ENCODE measurements at regions of chr10 and their contacts with region 1.

Region 1: DNA sequence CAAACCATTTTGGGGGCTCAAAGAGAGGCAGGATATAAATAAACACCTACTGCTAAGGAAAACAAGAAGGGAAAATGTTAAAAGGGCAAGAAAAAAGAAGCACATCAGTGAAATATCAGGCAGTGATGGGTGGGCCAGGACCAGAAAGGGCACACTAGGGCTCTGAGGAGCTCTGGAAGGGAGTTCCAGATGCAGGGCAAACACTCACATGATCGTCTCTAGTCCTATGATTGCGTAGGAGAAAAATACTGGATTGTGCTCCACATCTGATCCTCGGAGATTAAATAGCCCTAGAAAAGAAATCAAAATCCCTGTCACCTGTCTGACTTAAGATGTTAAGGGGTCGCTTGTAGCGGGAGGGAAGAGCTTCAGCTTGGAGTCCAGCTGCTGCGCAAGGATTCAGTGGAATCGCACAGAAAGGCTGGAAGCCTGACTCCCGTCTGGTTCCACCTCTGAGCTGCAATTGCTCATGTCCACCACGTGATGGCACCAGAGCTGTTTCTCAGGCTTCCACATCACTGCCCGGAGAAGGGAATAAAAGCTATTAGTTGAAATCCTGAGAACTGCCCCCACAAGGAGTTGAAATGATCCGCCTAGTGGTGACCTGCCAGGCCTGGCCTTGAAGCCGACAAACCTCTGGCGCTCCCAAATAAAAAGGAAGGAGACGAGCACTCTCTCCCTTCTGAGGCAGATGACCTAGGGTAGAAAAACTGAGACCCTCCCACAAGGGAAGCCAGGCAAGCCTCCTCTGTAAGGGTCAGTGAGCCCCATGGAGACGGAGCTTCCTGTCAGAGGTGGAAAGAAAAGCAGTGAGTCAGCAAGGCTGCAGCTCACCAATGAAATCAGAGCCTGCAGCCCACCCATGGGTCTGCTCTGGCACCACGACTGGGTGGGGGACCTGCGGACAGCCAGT is 39.2 kb downstream of the XPNPEP1 start:
- DNase-seq: peak; percentile 90
- H3K4me3 Mint-ChIP-seq: no peak overlapping the region
- H3K27ac Mint-ChIP-seq: no peak overlapping the region
- H3K4me1 Mint-ChIP-seq: no peaks in the 10 kb centered on the region
- H3K27me3 Mint-ChIP-seq: no peaks in the 10 kb centered on the region
- CTCF ChIP-seq: peak; percentile 92

Region 2: GRCh38 chr10:109166935-109167334 is 717.2 kb before region 1 on chr10:
- CTCF ChIA-PET with region 1: no interaction called
- POLR2A ChIA-PET with region 1: no interaction called
- intact Hi-C with region 1: no loop called
- DNase-seq: no peak
- H3K4me3 Mint-ChIP-seq: no peak overlapping the region
- H3K27ac Mint-ChIP-seq: no peak overlapping the region
- H3K4me1 Mint-ChIP-seq: peaks cover 13% of the 10 kb centered on the region
- H3K27me3 Mint-ChIP-seq: no peaks in the 10 kb centered on the region
- CTCF ChIP-seq: no peak

Region 3: DNA sequence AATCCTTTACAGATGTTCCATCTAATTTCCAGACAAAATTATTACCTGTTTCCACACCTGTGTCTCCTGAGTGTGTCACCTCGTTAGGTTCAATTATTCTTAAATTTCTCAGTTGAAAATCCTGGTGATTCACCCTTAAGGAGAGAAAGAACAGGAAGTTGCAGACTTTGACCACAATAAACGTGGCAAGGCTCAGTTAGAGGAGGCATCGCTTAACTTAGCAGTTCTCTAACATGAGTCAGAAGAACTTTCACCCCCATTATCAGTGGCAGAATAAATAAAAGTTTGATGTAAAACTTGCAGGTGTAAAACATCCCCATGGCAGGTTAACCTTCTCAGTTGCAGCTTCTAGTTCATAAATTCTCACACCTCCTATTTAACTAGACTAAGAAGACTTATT is 30.9 kb after region 1 on chr10:
- CTCF ChIA-PET with region 1: interaction called, 12 read pairs
- POLR2A ChIA-PET with region 1: interaction called, 122 read pairs
- intact Hi-C with region 1: no loop called
- DNase-seq: peak; percentile 88
- H3K4me3 Mint-ChIP-seq: peak overlapping the region; percentile 33
- H3K27ac Mint-ChIP-seq: peak overlapping the region; percentile 89
- H3K4me1 Mint-ChIP-seq: peaks cover 44% of the 10 kb centered on the region
- H3K27me3 Mint-ChIP-seq: no peaks in the 10 kb centered on the region
- CTCF ChIP-seq: no peak

Region 4: DNA sequence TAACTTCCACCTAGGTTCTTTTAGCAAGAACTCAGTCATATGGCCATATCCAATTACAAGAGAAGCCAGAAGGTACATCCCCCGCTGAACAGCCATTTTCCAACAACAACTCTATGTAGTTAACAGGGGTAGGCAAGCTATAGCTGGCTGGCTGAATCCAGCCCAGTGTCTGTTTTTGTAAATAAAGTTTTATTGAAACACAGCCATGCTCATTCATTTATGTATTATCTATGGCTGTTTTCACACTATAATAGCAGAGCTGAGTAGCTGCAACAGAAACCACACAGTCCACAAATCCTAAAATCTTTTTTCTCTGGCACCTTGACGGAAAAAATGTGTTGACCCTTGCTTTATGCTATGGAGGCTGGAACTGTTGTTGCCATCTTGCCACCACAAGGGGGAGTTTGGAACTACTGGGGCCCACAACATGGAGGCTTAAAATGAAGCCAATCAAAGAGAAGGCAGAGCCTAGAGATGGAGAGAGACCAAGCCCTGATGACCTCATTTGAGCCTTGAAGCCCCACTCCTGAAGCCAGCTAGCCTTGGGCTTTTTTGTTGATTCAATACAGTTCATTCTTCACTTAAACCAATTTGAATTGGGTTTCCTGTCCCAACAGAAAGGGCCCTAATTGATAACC is 72.5 kb after region 1 on chr10:
- CTCF ChIA-PET with region 1: no interaction called
- POLR2A ChIA-PET with region 1: interaction called, 4 read pairs
- intact Hi-C with region 1: loop called (anchors 10 kb)
- DNase-seq: peak; percentile 54
- H3K4me3 Mint-ChIP-seq: no peak overlapping the region
- H3K27ac Mint-ChIP-seq: no peak overlapping the region
- H3K4me1 Mint-ChIP-seq: peaks cover 17% of the 10 kb centered on the region
- H3K27me3 Mint-ChIP-seq: no peaks in the 10 kb centered on the region
- CTCF ChIP-seq: peak; percentile 43

Region 5: GRCh38 chr10:110016039-110016438 is 131.9 kb after region 1 on chr10:
- CTCF ChIA-PET with region 1: interaction called, 118 read pairs
- POLR2A ChIA-PET with region 1: interaction called, 9 read pairs
- intact Hi-C with region 1: loop called (anchors 1 kb)
- DNase-seq: peak; percentile 28
- H3K4me3 Mint-ChIP-seq: no peak overlapping the region
- H3K27ac Mint-ChIP-seq: no peak overlapping the region
- H3K4me1 Mint-ChIP-seq: peaks cover 12% of the 10 kb centered on the region
- H3K27me3 Mint-ChIP-seq: no peaks in the 10 kb centered on the region
- CTCF ChIP-seq: peak; percentile 41

Region 6: DNA sequence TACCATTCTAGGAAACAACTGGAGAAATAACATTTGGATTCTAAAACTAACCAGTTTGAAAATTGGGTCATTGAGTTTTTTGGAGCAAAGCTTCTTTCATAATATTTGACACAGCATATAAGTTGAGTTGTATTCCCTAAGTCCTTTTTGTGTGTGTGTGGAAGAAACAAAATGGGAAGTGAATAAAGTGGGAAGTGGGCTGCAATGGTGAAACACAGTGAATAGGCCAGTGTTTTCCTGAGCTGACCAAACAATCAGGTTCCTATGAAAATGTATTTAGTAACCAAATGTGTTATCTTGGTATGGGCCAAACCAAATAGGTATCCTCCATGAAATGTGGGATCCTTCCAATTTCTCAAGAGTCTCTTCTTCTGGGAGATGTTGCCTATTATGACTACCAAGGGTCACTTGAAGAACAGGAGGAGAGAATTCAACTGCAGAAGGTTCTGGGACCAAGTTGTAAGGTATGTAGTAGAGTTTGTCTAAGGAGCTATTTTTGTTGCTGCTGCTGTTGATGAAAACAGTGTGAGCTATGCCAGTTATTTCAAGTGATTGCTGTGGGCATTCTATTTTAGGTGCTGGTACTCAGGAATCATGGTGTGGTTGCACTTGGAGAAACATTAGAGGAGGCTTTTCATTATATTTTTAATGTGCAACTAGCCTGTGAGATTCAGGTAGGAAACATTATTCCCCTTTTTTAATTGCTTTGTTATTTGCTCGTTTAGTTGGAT is 234.9 kb after region 1 on chr10:
- CTCF ChIA-PET with region 1: interaction called, 12 read pairs
- POLR2A ChIA-PET with region 1: interaction called, 4 read pairs
- intact Hi-C with region 1: no loop called
- DNase-seq: no peak
- H3K4me3 Mint-ChIP-seq: no peak overlapping the region
- H3K27ac Mint-ChIP-seq: no peak overlapping the region
- H3K4me1 Mint-ChIP-seq: no peaks in the 10 kb centered on the region
- H3K27me3 Mint-ChIP-seq: no peaks in the 10 kb centered on the region
- CTCF ChIP-seq: no peak

Region 7: GRCh38 chr10:110279407-110279986 is 395.4 kb after region 1 on chr10:
- CTCF ChIA-PET with region 1: interaction called, 15 read pairs
- POLR2A ChIA-PET with region 1: no interaction called
- intact Hi-C with region 1: loop called (anchors 1 kb)
- DNase-seq: peak; percentile 71
- H3K4me3 Mint-ChIP-seq: no peak overlapping the region
- H3K27ac Mint-ChIP-seq: no peak overlapping the region
- H3K4me1 Mint-ChIP-seq: no peaks in the 10 kb centered on the region
- H3K27me3 Mint-ChIP-seq: no peaks in the 10 kb centered on the region
- CTCF ChIP-seq: peak; percentile 80

Measured in MCF 10A (cell line).